A549 (cell line): ENCODE measurements at regions of chr2 and their contacts with region 1.

Region 1: DNA sequence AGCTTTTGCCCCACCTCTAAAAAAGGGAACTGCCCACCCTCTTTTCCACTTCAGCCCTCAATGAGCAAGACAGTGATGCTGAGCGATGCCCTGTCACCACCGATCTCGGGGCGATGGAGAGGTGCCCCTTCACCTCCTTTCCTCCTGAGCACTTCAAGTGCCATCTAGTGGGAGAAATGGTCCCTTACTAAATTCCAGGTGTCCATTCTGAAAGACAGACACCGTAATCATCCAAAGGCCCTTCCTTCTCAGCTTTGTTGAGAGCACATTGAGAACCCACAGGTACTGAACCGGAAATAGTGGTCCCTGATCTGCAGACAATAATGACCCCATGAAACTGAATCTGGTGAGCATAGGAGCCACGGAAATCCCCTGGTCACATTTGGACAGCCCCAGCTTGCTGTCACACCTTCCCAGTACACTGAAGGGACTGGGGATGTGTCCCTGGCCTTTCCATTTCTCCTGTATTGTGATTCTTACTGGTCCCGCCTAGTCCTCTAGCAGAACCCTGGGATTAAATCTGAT is 38.5 kb downstream of the KCTD18 start:
- DNase-seq: peak; percentile 57 to 61
- ATAC-seq: peak; percentile 82 to 89
- H3K4me3 ChIP-seq: no peak overlapping the region
- H3K27ac ChIP-seq: peak overlapping the region; percentile 22 to 56; a peak in 4 of 6 replicates
- H3K4me1 ChIP-seq: no peaks in the 10 kb centered on the region
- CTCF ChIP-seq: peak; percentile 81
- EP300 ChIP-seq: no peak
- POLR2A ChIP-seq: no peak
- RAD21 ChIP-seq: peak; percentile 86 to 88

Region 2: DNA sequence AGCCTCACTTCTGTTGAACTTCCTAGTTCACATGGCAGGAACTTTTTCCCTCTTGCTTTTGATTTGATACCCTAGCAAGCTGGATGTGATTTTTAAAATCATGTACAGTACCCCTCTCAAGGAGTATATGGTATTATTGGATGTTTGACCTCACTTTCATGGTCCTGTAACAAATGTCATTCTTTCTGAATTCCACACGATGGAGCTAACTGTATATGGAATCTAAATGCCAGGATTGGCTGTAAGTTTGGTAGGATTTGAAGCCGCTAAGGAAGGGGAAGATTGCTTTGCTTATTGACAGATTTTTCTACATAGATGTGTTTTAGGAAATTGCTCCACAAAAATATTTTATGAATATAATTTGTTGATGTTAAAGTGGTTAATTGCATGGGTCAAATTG is 497.7 kb before region 1 on chr2:
- CTCF ChIA-PET with region 1: interaction called, 35 read pairs
- POLR2A ChIA-PET with region 1: no interaction called
- DNase-seq: peak; percentile 15 to 46
- ATAC-seq: peak; percentile 70 to 81; a peak in 5 of 6 replicates
- H3K4me3 ChIP-seq: no peak overlapping the region
- H3K27ac ChIP-seq: peak overlapping the region in 1 of 2 experiments; percentile 80; a peak in 3 of 6 replicates
- H3K4me1 ChIP-seq: peaks cover 28% of the 10 kb centered on the region
- CTCF ChIP-seq: peak; percentile 82
- EP300 ChIP-seq: no peak
- POLR2A ChIP-seq: no peak
- RAD21 ChIP-seq: peak; percentile 84 to 87

Region 3: DNA sequence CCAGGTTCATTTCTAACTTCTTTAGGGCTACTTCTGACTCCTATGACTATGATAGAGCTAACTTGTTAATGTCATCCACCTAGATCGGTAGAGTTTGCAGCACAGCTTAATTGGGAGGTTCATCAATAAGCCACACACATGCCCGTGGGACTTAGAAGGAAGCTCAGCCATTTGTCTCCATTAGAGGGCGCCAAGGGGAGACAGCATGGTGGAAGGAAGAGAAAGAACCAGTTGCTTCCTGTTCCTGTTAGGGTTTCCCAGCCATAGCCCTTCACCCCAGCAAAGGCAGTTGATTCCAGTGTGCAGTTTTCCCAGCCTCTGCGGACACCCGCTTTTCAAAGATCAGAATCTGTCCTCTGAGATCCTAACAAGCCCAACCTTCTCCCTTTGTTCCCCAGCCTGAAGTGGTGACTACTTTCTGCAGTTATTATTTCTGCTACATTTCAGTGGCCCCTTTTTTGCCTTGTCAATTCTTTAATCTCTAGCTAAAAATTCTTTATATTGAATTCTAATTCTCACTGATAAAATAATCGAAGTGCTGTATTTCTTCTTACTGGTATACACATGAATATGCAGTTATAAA is 485.7 kb before region 1 on chr2:
- CTCF ChIA-PET with region 1: interaction called, 34 read pairs
- POLR2A ChIA-PET with region 1: no interaction called
- DNase-seq: peak; percentile 31 to 84
- ATAC-seq: peak; percentile 82 to 98
- H3K4me3 ChIP-seq: no peak overlapping the region
- H3K27ac ChIP-seq: peak overlapping the region; percentile 33 to 74; a peak in 4 of 6 replicates
- H3K4me1 ChIP-seq: no peaks in the 10 kb centered on the region
- CTCF ChIP-seq: peak; percentile 57
- EP300 ChIP-seq: no peak
- POLR2A ChIP-seq: no peak
- RAD21 ChIP-seq: peak; percentile 57 to 76

Region 4: GRCh38 chr2:200415455-200415854 is 55.9 kb before region 1 on chr2:
- CTCF ChIA-PET with region 1: interaction called, 10 read pairs
- POLR2A ChIA-PET with region 1: no interaction called
- DNase-seq: no peak
- ATAC-seq: no peak
- H3K4me3 ChIP-seq: no peak overlapping the region
- H3K27ac ChIP-seq: no peak overlapping the region
- H3K4me1 ChIP-seq: peaks cover 19% of the 10 kb centered on the region
- CTCF ChIP-seq: no peak
- EP300 ChIP-seq: no peak
- POLR2A ChIP-seq: no peak
- RAD21 ChIP-seq: no peak

Region 5: DNA sequence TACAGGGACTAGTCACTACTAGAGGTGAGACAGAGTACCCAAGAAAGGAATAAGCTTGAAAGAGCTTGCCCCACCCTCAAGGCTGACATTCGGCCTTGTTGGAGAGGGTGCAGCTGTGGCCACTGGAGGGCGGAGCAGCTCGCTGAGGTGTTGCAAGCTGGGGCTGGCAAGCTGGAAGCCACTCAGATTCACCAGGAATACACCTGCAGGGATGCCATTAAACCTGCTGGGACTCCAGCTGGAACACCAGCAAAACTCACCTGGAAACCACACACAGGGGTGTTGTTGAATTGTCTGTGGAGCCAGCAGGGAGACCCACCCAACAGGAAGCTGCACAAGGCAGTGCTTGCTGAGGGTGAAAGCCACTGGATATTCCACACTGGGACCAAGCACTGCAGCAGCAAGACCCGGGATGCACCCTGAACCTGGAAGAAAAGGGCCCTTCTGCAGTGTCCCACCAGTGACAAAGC is 12.4 kb after region 1 on chr2:
- CTCF ChIA-PET with region 1: interaction called, 76 read pairs
- POLR2A ChIA-PET with region 1: no interaction called
- DNase-seq: peak; percentile 29 to 71
- ATAC-seq: peak; percentile 79
- H3K4me3 ChIP-seq: no peak overlapping the region
- H3K27ac ChIP-seq: peak overlapping the region in 1 of 2 experiments; percentile 70; a peak in 3 of 6 replicates
- H3K4me1 ChIP-seq: peaks cover 61% of the 10 kb centered on the region
- CTCF ChIP-seq: peak; percentile 67
- EP300 ChIP-seq: no peak
- POLR2A ChIP-seq: no peak
- RAD21 ChIP-seq: peak; percentile 64 to 67